SK-N-SH (cell line): ENCODE measurements at regions of chr11 and their contacts with region 1.

Region 1: GRCh38 chr11:75142714-75143419 is 8.0 kb upstream of the SLCO2B1 start:
- DNase-seq: peak; percentile 63
- H3K4me3 ChIP-seq: no peak overlapping the region
- H3K27ac ChIP-seq: peak overlapping the region; percentile 60 to 61; a peak in 3 of 4 replicates
- H3K4me1 ChIP-seq: peaks cover 10 to 21% of the 10 kb centered on the region in 2 experiments; a peak in 2 of 4 replicates
- H3K27me3 ChIP-seq: no peaks in the 10 kb centered on the region; the same call in 1 of the 2 replicates
- CTCF ChIP-seq: no peak
- EP300 ChIP-seq: no peak; a peak in 1 of 4 replicates
- RAD21 ChIP-seq: no peak; the same call in 1 of the 2 replicates

Region 2: GRCh38 chr11:74937696-74938475 is 205.0 kb before region 1 on chr11:
- CTCF ChIA-PET with region 1: interaction called, 48 read pairs
- POLR2A ChIA-PET with region 1: no interaction called
- DNase-seq: no peak
- H3K4me3 ChIP-seq: no peak overlapping the region
- H3K27ac ChIP-seq: peak overlapping the region in 1 of 2 experiments; percentile 80; a peak in 2 of 4 replicates
- H3K4me1 ChIP-seq: peaks cover 18 to 21% of the 10 kb centered on the region in 2 experiments
- H3K27me3 ChIP-seq: no peaks in the 10 kb centered on the region
- CTCF ChIP-seq: no peak
- EP300 ChIP-seq: no peak
- RAD21 ChIP-seq: no peak

Region 3: DNA sequence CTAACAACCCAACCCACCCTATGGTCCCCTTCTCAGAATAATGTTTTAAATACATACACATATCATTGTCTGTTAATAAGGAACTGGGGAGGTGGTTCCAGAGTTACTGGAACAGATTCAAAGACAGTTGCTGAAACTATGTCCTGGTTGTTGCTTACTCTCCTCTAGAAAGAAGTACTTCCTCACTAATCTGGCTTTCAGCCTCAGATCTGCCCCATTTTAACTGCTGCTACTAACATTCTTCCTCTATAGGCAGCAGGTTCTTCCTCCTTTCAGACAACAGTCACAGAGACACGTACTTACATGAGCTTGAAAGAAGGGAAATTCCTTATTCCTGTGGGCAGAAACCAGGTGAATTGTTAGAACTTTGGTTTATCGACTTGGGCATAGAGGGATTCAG is 162.2 kb before region 1 on chr11:
- CTCF ChIA-PET with region 1: no interaction called
- POLR2A ChIA-PET with region 1: no interaction called
- DNase-seq: no peak
- H3K4me3 ChIP-seq: no peak overlapping the region
- H3K27ac ChIP-seq: no peak overlapping the region
- H3K4me1 ChIP-seq: no peaks in the 10 kb centered on the region
- H3K27me3 ChIP-seq: no peaks in the 10 kb centered on the region
- CTCF ChIP-seq: no peak
- EP300 ChIP-seq: no peak
- RAD21 ChIP-seq: no peak

Region 4: GRCh38 chr11:75051043-75051442 is 91.8 kb before region 1 on chr11:
- CTCF ChIA-PET with region 1: interaction called, 12 read pairs
- POLR2A ChIA-PET with region 1: no interaction called
- DNase-seq: no peak
- H3K4me3 ChIP-seq: no peak overlapping the region
- H3K27ac ChIP-seq: no peak overlapping the region
- H3K4me1 ChIP-seq: no peaks in the 10 kb centered on the region
- H3K27me3 ChIP-seq: no peaks in the 10 kb centered on the region
- CTCF ChIP-seq: no peak
- EP300 ChIP-seq: no peak
- RAD21 ChIP-seq: no peak

Region 5: DNA sequence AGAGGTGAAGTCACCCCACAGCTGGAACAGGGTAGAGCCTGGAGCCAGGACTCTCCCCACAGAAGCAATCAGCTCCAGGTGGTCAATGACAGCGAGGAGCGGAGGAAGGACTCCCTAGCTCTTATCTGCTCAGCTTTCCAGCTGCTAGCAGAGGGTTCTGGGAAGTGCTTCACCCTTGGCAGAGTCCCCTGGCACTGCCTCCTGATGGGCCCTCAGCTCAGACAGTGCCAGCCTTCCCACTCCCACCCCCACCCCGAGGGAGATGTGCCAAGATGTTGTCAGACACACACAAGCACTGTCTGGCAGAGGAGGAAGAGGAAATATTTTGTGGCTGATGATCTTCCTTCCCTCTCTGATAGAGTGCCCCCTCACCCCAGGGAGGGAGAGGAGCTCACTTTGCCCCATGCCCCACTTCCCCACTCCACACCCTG is 52.3 kb after region 1 on chr11:
- CTCF ChIA-PET with region 1: interaction called, 630 read pairs
- POLR2A ChIA-PET with region 1: no interaction called
- DNase-seq: peak; percentile 71
- H3K4me3 ChIP-seq: no peak overlapping the region
- H3K27ac ChIP-seq: peak overlapping the region in 1 of 2 experiments; percentile 4; a peak in 1 of 4 replicates
- H3K4me1 ChIP-seq: peaks cover 0 to 26% of the 10 kb centered on the region in 2 experiments; a peak in 1 of 4 replicates
- H3K27me3 ChIP-seq: no peaks in the 10 kb centered on the region
- CTCF ChIP-seq: no peak
- EP300 ChIP-seq: peak in 1 of 2 experiments; percentile 19; a peak in 1 of 4 replicates
- RAD21 ChIP-seq: no peak

Region 6: DNA sequence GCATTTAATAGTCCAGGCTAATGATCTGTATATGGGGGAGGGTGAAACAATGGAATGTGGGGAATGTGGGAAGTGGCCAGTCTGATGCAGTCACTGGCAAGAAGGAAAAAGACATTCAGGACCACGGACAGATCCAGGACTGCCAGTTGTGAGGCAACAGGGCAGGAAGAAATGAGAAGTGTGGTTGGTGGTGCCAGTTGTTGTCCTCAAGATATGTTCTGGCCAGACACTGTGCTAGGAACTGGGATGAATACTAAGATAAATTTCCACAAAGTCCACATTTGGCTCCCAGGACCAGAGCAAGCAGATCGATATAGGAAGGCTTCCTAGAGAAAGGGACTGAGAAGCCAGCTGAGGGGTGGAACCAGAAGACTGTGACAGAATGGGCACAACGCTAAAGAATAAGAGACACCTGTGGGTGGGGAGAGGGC is 90.9 kb after region 1 on chr11:
- CTCF ChIA-PET with region 1: interaction called, 1,115 read pairs
- POLR2A ChIA-PET with region 1: no interaction called
- DNase-seq: no peak
- H3K4me3 ChIP-seq: no peak overlapping the region
- H3K27ac ChIP-seq: no peak overlapping the region
- H3K4me1 ChIP-seq: peaks cover 0 to 2% of the 10 kb centered on the region in 2 experiments; a peak in 1 of 4 replicates
- H3K27me3 ChIP-seq: no peaks in the 10 kb centered on the region
- CTCF ChIP-seq: no peak
- EP300 ChIP-seq: no peak
- RAD21 ChIP-seq: no peak

Region 7: DNA sequence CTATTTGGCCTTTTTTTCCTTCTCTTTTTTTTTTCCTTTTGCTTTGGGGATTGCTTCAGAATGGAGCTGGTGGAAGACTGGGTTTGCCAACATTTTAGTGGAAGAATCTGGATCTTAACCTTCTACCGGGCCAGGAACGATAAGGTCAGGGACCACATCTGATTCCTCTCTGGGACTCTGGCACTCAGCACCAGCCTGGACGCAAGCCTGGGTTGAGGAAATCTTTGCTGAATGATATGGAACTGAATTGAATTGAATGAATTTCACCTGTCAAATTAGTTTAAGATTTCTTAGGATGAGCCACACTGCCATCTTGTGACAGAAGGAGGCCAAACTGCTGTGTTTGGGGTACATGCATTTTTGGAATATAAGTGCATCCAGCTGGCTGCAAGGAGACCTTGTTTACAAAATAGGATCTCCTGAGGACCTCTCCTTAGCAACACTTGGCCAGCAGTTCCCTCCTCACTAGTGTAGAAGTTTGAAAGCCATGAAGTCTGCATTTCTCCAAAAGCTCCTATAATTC is 128.1 kb after region 1 on chr11:
- CTCF ChIA-PET with region 1: interaction called, 38 read pairs
- POLR2A ChIA-PET with region 1: no interaction called
- DNase-seq: no peak
- H3K4me3 ChIP-seq: no peak overlapping the region
- H3K27ac ChIP-seq: no peak overlapping the region
- H3K4me1 ChIP-seq: peaks cover 0 to 11% of the 10 kb centered on the region in 2 experiments; a peak in 1 of 4 replicates
- H3K27me3 ChIP-seq: no peaks in the 10 kb centered on the region
- CTCF ChIP-seq: peak; percentile 34; the same call in 1 of the 2 replicates
- EP300 ChIP-seq: no peak
- RAD21 ChIP-seq: peak; percentile 49

Region 8: GRCh38 chr11:75293903-75294302 is 151.0 kb after region 1 on chr11:
- CTCF ChIA-PET with region 1: no interaction called
- POLR2A ChIA-PET with region 1: no interaction called
- DNase-seq: no peak
- H3K4me3 ChIP-seq: no peak overlapping the region
- H3K27ac ChIP-seq: no peak overlapping the region
- H3K4me1 ChIP-seq: no peaks in the 10 kb centered on the region; a peak in 1 of 4 replicates
- H3K27me3 ChIP-seq: no peaks in the 10 kb centered on the region
- CTCF ChIP-seq: no peak
- EP300 ChIP-seq: no peak
- RAD21 ChIP-seq: no peak